GM10248 (cell line): ENCODE measurements at regions of chr19 and their contacts with region 1.

Region 1: GRCh38 chr19:7340959-7341837 is 7.5 kb upstream of the ARHGEF18 start:
- DNase-seq: no peak
- CTCF ChIP-seq: peak; percentile 96

Region 2: GRCh38 chr19:7101498-7102253 is 239.5 kb before region 1 on chr19:
- CTCF ChIA-PET with region 1: interaction called, 30 read pairs
- POLR2A ChIA-PET with region 1: interaction called, 3 read pairs
- DNase-seq: no peak
- CTCF ChIP-seq: no peak

Region 3: GRCh38 chr19:7149956-7150705 is 191.1 kb before region 1 on chr19:
- CTCF ChIA-PET with region 1: interaction called, 20 read pairs
- POLR2A ChIA-PET with region 1: no interaction called
- DNase-seq: no peak
- CTCF ChIP-seq: no peak

Region 4: GRCh38 chr19:7179917-7180306 is 161.3 kb before region 1 on chr19:
- CTCF ChIA-PET with region 1: interaction called, 10 read pairs
- POLR2A ChIA-PET with region 1: interaction called, 3 read pairs
- DNase-seq: no peak
- CTCF ChIP-seq: no peak

Region 5: DNA sequence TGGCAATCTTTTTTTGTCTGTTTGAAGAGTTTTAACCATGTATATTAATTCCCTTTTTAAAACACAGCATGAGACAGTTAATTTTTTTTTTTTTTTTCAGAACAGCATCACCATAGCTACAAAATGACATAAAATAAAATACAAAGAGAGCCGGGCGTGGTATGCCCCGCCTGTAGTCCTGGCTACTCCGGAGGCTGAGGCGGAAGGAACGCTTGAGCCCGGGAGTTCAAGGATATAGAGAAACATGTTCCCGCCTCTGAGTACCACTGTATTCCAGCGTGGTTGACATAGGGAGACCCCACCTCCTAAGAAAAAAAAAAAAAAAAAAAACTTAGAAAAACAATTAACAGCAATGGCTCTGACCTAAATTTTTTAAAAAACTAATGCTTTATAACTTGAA is 37.0 kb before region 1 on chr19:
- CTCF ChIA-PET with region 1: no interaction called
- POLR2A ChIA-PET with region 1: no interaction called
- DNase-seq: no peak
- CTCF ChIP-seq: no peak

Region 6: GRCh38 chr19:7326105-7326877 is 14.9 kb before region 1 on chr19:
- CTCF ChIA-PET with region 1: interaction called, 83 read pairs
- POLR2A ChIA-PET with region 1: no interaction called
- DNase-seq: peak; percentile 45
- CTCF ChIP-seq: peak; percentile 36

Region 7: GRCh38 chr19:7355151-7355820 is 14.1 kb after region 1 on chr19:
- CTCF ChIA-PET with region 1: interaction called, 19 read pairs
- POLR2A ChIA-PET with region 1: no interaction called
- DNase-seq: no peak
- CTCF ChIP-seq: no peak

Region 8: GRCh38 chr19:7366701-7367420 is 25.7 kb after region 1 on chr19:
- CTCF ChIA-PET with region 1: interaction called, 10 read pairs
- POLR2A ChIA-PET with region 1: no interaction called
- DNase-seq: peak; percentile 76
- CTCF ChIP-seq: peak; percentile 67